Ovary (tissue), 10 donors: ENCODE measurements at regions of chr2 and their contacts with region 1.

Region 1: GRCh38 chr2:119809339-119810048 is 49.8 kb downstream of the PTPN4 start:
- DNase-seq: peak in 1 of 5 donors; percentile 30
- H3K4me3 ChIP-seq: no peak overlapping the region
- H3K27ac ChIP-seq: no peak overlapping the region
- H3K4me1 ChIP-seq: peaks cover 2% of the 10 kb centered on the region
- H3K27me3 ChIP-seq: no peaks in the 10 kb centered on the region
- CTCF ChIP-seq: no peak
- EP300 ChIP-seq: no peak
- POLR2A ChIP-seq: no peak

Region 2: DNA sequence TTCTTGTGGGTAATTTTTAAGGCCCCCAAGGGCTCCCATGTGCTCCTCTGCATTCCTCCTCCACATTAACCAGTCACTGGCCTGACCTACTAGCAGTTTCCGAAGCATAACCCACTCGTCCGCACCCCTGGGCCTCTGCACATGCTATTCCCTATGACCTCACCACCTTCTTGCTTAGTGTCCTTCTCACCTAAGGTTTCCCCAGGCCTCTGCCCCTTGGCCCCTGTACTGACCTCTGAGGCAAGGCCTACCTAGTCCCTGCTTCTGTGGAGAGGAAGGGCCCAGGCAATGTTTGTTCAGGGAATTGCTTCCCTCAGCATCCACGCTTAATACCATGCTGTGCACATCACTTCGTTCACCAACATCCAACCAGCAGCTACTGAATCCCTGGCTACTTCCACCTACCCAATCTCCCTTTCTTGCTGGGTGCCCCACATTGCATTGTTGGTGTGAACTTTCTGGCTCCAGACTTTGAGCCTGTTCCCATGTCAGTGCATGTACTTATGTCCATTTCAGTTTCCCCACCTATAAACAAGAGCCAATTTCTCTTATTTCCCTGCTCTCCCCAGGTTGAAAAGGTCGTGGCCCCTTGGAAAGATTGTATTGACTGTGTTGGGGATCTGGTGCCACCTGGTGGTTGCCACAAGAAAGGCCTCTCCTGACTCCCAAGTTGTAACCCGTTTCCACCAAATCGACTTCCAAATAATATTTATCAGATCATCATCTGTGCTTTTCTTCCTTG is 149.7 kb before region 1 on chr2:
- intact Hi-C with region 1: no loop called
- DNase-seq: peak in 2 of 5 donors; percentile 18 to 26
- H3K4me3 ChIP-seq: no peak overlapping the region
- H3K27ac ChIP-seq: no peak overlapping the region
- H3K4me1 ChIP-seq: no peaks in the 10 kb centered on the region
- H3K27me3 ChIP-seq: no peaks in the 10 kb centered on the region
- CTCF ChIP-seq: peak in 2 of 3 donors; percentile 15 to 26
- EP300 ChIP-seq: no peak
- POLR2A ChIP-seq: no peak

Region 3: DNA sequence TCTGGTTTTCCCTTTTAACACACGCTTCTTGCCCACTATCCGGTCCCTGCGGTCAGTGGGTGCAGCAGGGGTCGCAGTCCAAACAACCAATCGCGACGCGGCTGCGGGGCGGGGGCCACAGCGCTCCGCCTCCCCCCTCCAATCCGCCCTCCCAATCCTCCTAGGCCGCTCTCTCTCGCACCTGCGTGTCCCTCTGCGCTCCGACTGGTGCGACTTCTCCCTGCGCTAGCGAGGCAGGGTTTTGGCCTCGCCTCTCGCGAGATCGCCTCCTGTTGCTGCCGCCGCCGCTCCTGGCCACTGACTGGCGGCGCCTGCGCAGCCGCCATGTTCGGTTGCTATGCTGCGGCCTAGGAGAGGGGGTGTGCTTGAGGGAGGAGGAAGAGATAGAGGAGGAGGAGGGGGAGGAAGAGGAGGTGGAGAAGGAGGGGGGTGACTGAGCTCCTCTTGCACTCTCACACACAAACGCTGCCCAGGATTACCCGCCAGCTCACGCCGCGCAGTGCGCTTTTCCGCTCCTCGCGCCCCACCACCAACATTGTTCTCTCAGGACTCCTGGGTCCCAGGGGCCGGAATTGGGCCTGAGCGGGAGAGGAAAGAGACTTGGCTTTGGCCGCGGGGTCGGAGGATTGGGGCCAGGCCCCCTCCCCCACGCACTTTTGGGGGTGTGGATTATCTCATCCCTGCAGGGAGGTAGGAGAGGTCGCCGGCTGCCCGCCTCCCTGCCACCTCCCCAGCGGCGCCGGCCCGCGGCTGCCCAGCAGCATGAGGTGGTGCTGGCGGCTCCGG is 49.9 kb before region 1 on chr2 and contains the start of gene PTPN4:
- intact Hi-C with region 1: loop called in 1 of 4 experiments (anchors 10 kb)
- DNase-seq: peak; percentile 95 to 97 (median 96)
- H3K4me3 ChIP-seq: peak within 1 kb of the TSS; percentile 81
- H3K27ac ChIP-seq: peak within 1 kb of the TSS; percentile 76 to 94
- H3K4me1 ChIP-seq: peaks cover 5% of the 10 kb centered on the region
- H3K27me3 ChIP-seq: no peaks in the 10 kb centered on the region
- CTCF ChIP-seq: no peak
- EP300 ChIP-seq: no peak
- POLR2A ChIP-seq: peak; percentile 68
- total RNA-seq, gene PTPN4: 22.5 to 45.7 (median 36.0) TPM